CD8-positive, alpha-beta T cell (primary cell): ENCODE measurements at regions of chr10 and their contacts with region 1.

Region 1: GRCh38 chr10:68526626-68527307 is 556 bp downstream of the SLC25A16 start:
- DNase-seq: no peak
- ATAC-seq: no peak
- H3K4me3 ChIP-seq: peak overlapping the region; percentile 74 to 96
- H3K4me3 Mint-ChIP-seq: peak overlapping the region; percentile 92
- H3K27ac ChIP-seq: peak overlapping the region; percentile 91
- H3K27ac Mint-ChIP-seq: peak overlapping the region; percentile 96
- H3K4me1 ChIP-seq: peaks cover 6% of the 10 kb centered on the region
- H3K4me1 Mint-ChIP-seq: peaks cover 8% of the 10 kb centered on the region
- H3K27me3 ChIP-seq: no peaks in the 10 kb centered on the region
- H3K27me3 Mint-ChIP-seq: no peaks in the 10 kb centered on the region
- CTCF ChIP-seq: no peak

Region 2: GRCh38 chr10:67764012-67764822 is 762.5 kb before region 1 on chr10:
- CTCF ChIA-PET with region 1: no interaction called
- POLR2A ChIA-PET with region 1: no interaction called
- intact Hi-C with region 1: loop called (anchors 5 to 10 kb)
- DNase-seq: peak; percentile 96 to 100 (median 97)
- ATAC-seq: peak; percentile 80
- H3K4me3 ChIP-seq: peak overlapping the region; percentile 83 to 92
- H3K4me3 Mint-ChIP-seq: peak overlapping the region; percentile 92
- H3K27ac ChIP-seq: peak overlapping the region; percentile 84 to 89
- H3K27ac Mint-ChIP-seq: peak overlapping the region; percentile 97
- H3K4me1 ChIP-seq: no peaks in the 10 kb centered on the region
- H3K4me1 Mint-ChIP-seq: peaks cover 8% of the 10 kb centered on the region
- H3K27me3 ChIP-seq: no peaks in the 10 kb centered on the region
- H3K27me3 Mint-ChIP-seq: peaks cover 2% of the 10 kb centered on the region
- CTCF ChIP-seq: no peak

Region 3: DNA sequence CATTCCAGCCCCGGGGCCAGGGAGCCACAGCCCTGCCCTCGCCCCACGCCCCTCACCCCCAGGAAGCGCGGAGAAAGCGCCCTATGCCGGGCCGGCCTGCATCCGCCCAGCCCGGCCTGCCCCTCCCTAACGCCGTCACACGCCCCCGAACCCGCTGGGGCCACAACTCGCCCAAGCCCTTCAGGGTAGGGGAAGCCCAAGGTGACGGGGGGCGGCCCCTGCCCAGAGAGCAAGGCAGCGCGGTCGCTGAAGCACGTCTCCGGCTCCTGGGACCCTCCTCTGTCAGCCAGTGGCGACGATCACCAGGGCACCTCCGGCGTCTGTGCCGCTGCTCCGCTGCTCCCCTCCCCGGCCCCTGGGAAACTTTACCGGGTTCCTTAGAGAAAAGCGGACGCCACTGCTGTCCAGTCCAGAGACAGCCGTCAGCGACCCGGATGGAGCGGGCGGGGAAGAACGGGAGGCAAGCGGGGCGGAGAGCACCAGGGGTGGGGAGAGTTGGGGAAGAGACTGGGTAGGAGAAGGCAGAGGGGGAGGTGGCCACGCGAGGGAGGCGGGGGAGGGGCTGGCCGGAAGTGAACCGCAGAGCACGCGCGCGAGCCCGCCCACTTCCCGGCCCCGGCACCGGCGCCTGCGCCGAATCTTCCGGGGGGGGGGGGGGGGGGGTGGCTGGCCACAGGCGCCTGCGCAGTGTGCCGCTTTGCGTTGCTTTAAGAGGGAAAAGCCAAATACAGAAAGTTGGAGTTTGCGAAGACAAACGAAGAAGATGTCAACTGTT is 451.8 kb before region 1 on chr10 and contains the start of gene HERC4:
- CTCF ChIA-PET with region 1: no interaction called
- POLR2A ChIA-PET with region 1: no interaction called
- intact Hi-C with region 1: loop called in 1 of 2 experiments (anchors 10 kb)
- DNase-seq: peak; percentile 83 to 96 (median 90)
- ATAC-seq: peak; percentile 90
- H3K4me3 ChIP-seq: peak within 1 kb of the TSS; percentile 96
- H3K4me3 Mint-ChIP-seq: peak within 1 kb of the TSS; percentile 96
- H3K27ac ChIP-seq: peak within 1 kb of the TSS; percentile 91 to 96
- H3K27ac Mint-ChIP-seq: peak within 1 kb of the TSS; percentile 93
- H3K4me1 ChIP-seq: peaks cover 38% of the 10 kb centered on the region
- H3K4me1 Mint-ChIP-seq: peaks cover 40% of the 10 kb centered on the region
- H3K27me3 ChIP-seq: no peaks in the 10 kb centered on the region
- H3K27me3 Mint-ChIP-seq: no peaks in the 10 kb centered on the region
- CTCF ChIP-seq: no peak
- total RNA-seq, gene HERC4: 28.4 to 29.2 TPM

Region 4: GRCh38 chr10:68471586-68472408 is 55.0 kb before region 1 on chr10 and contains the start of gene DNA2:
- CTCF ChIA-PET with region 1: no interaction called
- POLR2A ChIA-PET with region 1: no interaction called
- intact Hi-C with region 1: loop called in 1 of 2 experiments (anchors 1 kb)
- DNase-seq: peak; percentile 46 to 85 (median 68)
- ATAC-seq: peak; percentile 81
- H3K4me3 ChIP-seq: peak within 1 kb of the TSS; percentile 72 to 96
- H3K4me3 Mint-ChIP-seq: peak within 1 kb of the TSS; percentile 99
- H3K27ac ChIP-seq: peak within 1 kb of the TSS; percentile 22 to 47
- H3K27ac Mint-ChIP-seq: peak within 1 kb of the TSS; percentile 79
- H3K4me1 ChIP-seq: no peaks in the 10 kb centered on the region
- H3K4me1 Mint-ChIP-seq: peaks cover 23% of the 10 kb centered on the region
- H3K27me3 ChIP-seq: no peaks in the 10 kb centered on the region
- H3K27me3 Mint-ChIP-seq: no peaks in the 10 kb centered on the region
- CTCF ChIP-seq: no peak
- total RNA-seq, gene DNA2: 5.3 to 9.9 TPM

Region 5: GRCh38 chr10:68955832-68956532 is 429.2 kb after region 1 on chr10 and contains the start of gene DDX21:
- CTCF ChIA-PET with region 1: interaction called, 3 read pairs
- POLR2A ChIA-PET with region 1: no interaction called
- intact Hi-C with region 1: loop called in 1 of 2 experiments (anchors 1 kb)
- DNase-seq: peak; percentile 68 to 95 (median 89)
- ATAC-seq: peak; percentile 75
- H3K4me3 ChIP-seq: peak within 1 kb of the TSS; percentile 85 to 96
- H3K4me3 Mint-ChIP-seq: peak within 1 kb of the TSS; percentile 100
- H3K27ac ChIP-seq: peak within 1 kb of the TSS; percentile 95 to 99
- H3K27ac Mint-ChIP-seq: peak within 1 kb of the TSS; percentile 100
- H3K4me1 ChIP-seq: peaks cover 21% of the 10 kb centered on the region
- H3K4me1 Mint-ChIP-seq: peaks cover 41% of the 10 kb centered on the region
- H3K27me3 ChIP-seq: no peaks in the 10 kb centered on the region
- H3K27me3 Mint-ChIP-seq: no peaks in the 10 kb centered on the region
- CTCF ChIP-seq: peak; percentile 71
- total RNA-seq, gene DDX21: 175 to 185 TPM